Vagina (tissue), 2 donors: ENCODE measurements at regions of chr6 and their contacts with region 1.

Region 1: DNA sequence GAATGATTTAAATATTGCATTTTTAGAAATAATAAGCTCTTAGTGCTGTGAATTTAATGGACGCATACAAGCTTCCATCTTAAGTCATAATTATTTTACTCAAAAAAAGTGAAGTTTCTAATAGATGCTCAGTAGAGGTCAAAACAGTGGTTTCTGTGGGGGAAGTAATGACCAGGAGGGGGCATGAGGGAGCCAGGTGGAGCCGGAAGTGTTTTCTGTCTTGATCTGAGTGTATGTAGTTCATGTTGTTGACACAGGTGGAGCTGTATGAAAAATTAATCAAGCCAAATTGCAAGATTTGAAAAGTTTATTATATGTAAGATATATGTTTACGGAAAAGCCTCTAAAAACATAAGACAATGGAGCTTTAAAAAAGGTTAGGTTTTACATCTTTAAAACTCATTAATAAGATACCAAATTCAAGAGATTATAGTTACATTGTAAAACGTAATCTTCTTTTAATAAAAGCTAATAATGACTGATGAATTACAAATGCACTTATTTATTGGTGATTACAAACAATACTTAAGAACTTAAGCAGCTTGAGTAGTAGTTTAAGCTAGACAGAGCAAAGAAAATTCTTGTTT is 68.0 kb downstream of the PLAGL1 start:
- DNase-seq: no peak
- H3K4me3 ChIP-seq: no peak overlapping the region
- H3K27ac ChIP-seq: no peak overlapping the region
- H3K4me1 ChIP-seq: no peaks in the 10 kb centered on the region
- H3K27me3 ChIP-seq: no peaks in the 10 kb centered on the region
- CTCF ChIP-seq: peak in 2 of 3 experiments; percentile 51 to 58
- POLR2A ChIP-seq: no peak

Region 2: DNA sequence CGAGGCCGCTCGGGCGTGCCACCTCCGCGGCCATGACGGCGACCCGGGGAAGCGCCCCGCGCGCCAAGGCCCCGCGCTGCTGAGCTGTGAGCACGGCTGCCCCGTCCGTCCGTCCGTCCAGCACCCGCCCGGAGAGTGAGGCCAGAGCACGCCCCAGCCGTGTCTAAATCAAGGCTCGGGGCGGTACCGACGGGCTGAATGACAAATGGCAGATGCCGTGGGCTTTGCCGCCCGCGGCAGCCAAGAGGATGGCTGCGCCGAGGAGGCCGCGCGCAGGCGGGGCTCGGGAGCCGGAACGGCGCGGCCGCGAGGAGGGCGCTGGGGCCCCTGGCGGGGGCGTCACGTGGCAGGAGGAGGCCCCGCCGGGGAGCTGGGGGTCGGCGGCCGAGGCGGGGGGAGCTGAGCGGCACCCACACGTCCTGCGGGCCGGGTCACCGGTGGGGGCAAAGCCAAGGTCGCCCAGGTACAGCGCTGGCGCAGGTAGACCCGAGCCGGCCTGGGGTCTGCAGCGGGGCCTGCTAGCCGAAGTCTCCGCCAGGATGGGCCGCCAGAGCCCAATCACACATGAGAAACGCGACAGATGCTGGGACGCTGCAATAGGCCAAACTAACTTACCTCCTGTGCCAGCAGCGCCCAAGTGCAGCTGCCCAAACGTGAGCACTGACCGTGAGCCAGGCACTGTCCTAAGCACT is 68.2 kb after region 1 on chr6 and contains the start of gene PLAGL1:
- intact Hi-C with region 1: loop called (anchors 10 kb)
- DNase-seq: no peak
- H3K4me3 ChIP-seq: peak within 1 kb of the TSS; percentile 49 to 62
- H3K27ac ChIP-seq: peak within 1 kb of the TSS; percentile 73
- H3K4me1 ChIP-seq: peaks cover 8% of the 10 kb centered on the region
- H3K27me3 ChIP-seq: no peaks in the 10 kb centered on the region
- CTCF ChIP-seq: no peak
- POLR2A ChIP-seq: peak in 1 of 2 donors; percentile 49
- total RNA-seq, gene PLAGL1: 23.1 TPM